Gastrocnemius medialis (tissue), 4 donors: ENCODE measurements at regions of chr1 and their contacts with region 1.

Region 1: GRCh38 chr1:197924516-197925123 is 7.4 kb downstream of the LHX9 start:
- DNase-seq: no peak
- ATAC-seq: peak; percentile 49 to 56
- H3K4me3 ChIP-seq: no peak overlapping the region
- H3K27ac ChIP-seq: no peak overlapping the region
- H3K4me1 ChIP-seq: peaks cover 0 to 1% of the 10 kb centered on the region in 2 donors
- H3K27me3 ChIP-seq: peaks cover 65 to 70% (median 67%) of the 10 kb centered on the region in 3 donors
- CTCF ChIP-seq: peak; percentile 19 to 71 (median 47)
- POLR2A ChIP-seq: no peak

Region 2: DNA sequence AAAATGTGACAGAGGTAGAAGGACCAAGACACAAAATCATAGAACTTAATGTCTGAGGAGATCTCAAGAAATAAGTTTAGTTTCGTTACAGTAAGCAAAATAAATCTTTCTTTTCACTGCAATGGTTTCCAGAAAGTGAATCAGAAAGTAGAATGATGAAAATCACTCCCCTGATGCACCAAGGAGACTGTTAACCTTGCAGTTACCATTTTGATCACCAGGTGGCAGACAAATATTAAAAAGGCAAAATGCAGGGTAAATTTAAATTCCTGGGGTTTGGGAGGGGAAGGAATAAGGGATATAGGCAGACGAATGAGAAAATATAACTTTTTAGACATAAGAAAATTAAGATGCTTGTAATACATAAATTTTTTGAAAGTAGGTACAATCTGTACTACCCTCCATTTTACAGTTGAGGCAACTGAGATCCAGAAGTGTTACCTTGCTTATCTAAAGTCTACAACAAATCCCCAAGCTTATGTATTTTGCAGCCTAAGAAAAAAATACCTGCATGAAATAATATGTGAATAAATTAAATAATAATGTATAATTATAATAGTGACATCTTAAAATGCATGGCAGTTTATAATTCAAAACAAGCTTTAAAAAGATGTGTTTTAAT is 403.4 kb before region 1 on chr1:
- in situ Hi-C with region 1: loop called in 2 of 4 experiments (anchors 5 to 10 kb)
- intact Hi-C with region 1: loop called (anchors 5 kb)
- DNase-seq: no peak
- ATAC-seq: no peak
- H3K4me3 ChIP-seq: no peak overlapping the region
- H3K27ac ChIP-seq: no peak overlapping the region
- H3K4me1 ChIP-seq: no peaks in the 10 kb centered on the region
- H3K27me3 ChIP-seq: no peaks in the 10 kb centered on the region
- CTCF ChIP-seq: peak in 2 of 5 experiments; percentile 23 to 48
- POLR2A ChIP-seq: no peak

Region 3: GRCh38 chr1:197526736-197527371 is 397.8 kb before region 1 on chr1:
- in situ Hi-C with region 1: loop called in 2 of 4 experiments (anchors 5 to 10 kb)
- intact Hi-C with region 1: loop called (anchors 5 kb)
- DNase-seq: no peak
- ATAC-seq: no peak
- H3K4me3 ChIP-seq: no peak overlapping the region
- H3K27ac ChIP-seq: no peak overlapping the region
- H3K4me1 ChIP-seq: no peaks in the 10 kb centered on the region
- H3K27me3 ChIP-seq: no peaks in the 10 kb centered on the region
- CTCF ChIP-seq: peak; percentile 33 to 77 (median 47)
- POLR2A ChIP-seq: no peak

Region 4: GRCh38 chr1:197614916-197615692 is 309.5 kb before region 1 on chr1:
- in situ Hi-C with region 1: loop called in 1 of 4 experiments (anchors 5 kb)
- intact Hi-C with region 1: loop called (anchors 2 kb)
- DNase-seq: no peak
- ATAC-seq: peak; percentile 52 to 69
- H3K4me3 ChIP-seq: no peak overlapping the region
- H3K27ac ChIP-seq: no peak overlapping the region
- H3K4me1 ChIP-seq: peaks cover 8 to 20% of the 10 kb centered on the region in 2 donors
- H3K27me3 ChIP-seq: no peaks in the 10 kb centered on the region
- CTCF ChIP-seq: peak; percentile 10 to 61 (median 44)
- POLR2A ChIP-seq: no peak